Astrocyte of the cerebellum (primary cell): ENCODE measurements at regions of chr1 and their contacts with region 1.

Region 1: GRCh38 chr1:218345673-218346390 is 696 bp downstream of the TGFB2 start:
- DNase-seq: peak; percentile 46
- H3K4me3 ChIP-seq: peak overlapping the region; percentile 80
- CTCF ChIP-seq: no peak

Region 2: DNA sequence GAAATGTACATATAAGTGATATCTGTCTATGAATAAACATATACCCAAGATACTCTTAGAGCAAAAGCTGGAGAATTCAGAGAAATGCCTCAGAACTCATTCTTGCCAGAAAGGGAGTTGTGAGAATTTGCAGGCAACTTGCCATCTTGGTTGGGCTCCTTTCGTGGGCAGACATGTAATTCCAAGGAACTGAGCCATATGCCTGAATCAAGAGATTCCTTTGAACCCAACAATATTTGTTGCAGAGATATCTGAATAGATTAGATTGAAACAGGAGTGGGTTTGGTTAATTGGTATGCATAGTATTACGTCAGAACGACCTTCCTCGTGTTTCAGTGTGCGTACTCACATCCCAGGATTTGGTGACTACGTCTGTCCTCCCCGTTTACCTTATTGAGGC is 66.3 kb after region 1 on chr1:
- in situ Hi-C with region 1: no loop called
- DNase-seq: peak; percentile 83
- H3K4me3 ChIP-seq: no peak overlapping the region
- CTCF ChIP-seq: no peak

Region 3: DNA sequence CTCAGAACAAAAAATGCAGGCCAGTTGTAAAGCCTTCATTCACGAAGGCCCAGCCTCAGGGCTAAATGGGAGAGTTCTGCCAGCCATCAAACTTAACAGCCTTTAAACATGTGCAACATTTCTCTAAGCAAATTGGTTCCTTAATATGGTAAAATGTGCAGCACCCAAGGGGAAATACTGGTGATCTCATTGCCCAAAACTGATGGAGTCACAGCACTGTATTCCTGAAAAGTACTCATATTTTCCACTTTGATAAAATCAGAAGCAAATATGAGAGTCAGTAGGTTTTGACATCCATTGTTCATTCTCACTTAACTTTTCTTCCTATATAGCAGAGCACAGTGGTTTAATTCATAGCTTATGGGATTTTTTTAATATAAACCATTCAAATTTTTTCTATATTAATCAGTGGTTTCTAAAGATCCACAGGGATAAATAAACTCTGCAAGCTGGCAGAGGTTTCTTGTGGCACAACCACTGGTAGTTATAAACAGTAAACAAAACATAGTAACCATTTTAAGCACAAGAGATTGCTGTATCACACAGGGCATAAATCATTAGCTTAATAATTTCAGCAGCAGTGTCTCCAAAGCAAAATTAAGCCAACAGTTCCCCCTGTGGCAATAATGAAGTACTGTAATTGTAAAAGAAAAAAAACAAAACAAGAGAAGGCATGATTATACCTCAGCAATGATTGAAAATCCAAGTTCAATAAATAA is 721.0 kb after region 1 on chr1:
- in situ Hi-C with region 1: loop called (anchors 25 kb)
- DNase-seq: peak; percentile 52
- H3K4me3 ChIP-seq: no peak overlapping the region
- CTCF ChIP-seq: peak; percentile 48